ENCODE measurements at regions of chr4 and their contacts with region 1.

Region 1: GRCh38 chr4:99054428-99054994 is 34.1 kb downstream of the ADH5 start:
- DNase-seq: no peak
- H3K4me3 ChIP-seq: no peak overlapping the region
- H3K27ac ChIP-seq: no peak overlapping the region
- H3K4me1 ChIP-seq: peaks cover 6 to 12% (median 9%) of the 10 kb centered on the region in 4 donors
- H3K27me3 ChIP-seq: no peaks in the 10 kb centered on the region
- CTCF ChIP-seq: no peak
- EP300 ChIP-seq: no peak
- POLR2A ChIP-seq: no peak

Region 2: DNA sequence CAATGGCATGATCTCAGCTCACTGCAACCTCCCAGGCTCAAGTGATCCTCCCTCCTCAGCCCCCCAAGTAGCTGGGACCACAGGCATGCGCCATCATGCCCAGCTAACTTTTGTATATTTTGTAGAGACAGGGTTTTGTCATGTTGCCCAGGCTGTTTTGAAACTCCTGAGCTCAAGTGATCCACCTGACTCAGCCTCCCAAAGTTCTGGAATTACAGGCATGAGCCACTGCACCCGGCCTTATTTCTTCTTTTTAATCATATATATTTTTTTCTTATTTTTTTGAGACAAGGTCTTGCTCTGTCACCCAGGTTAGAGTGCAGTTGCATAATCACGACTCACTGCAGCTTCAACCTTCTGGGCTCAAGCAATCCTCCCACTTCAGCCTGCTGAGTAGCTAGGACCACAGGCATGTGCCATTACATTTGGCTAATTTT is 580.1 kb before region 1 on chr4:
- intact Hi-C with region 1: loop called (anchors 10 kb)
- DNase-seq: no peak
- H3K4me3 ChIP-seq: no peak overlapping the region
- H3K27ac ChIP-seq: no peak overlapping the region
- H3K4me1 ChIP-seq: no peaks in the 10 kb centered on the region
- H3K27me3 ChIP-seq: no peaks in the 10 kb centered on the region
- CTCF ChIP-seq: no peak
- EP300 ChIP-seq: no peak
- POLR2A ChIP-seq: no peak

Region 3: GRCh38 chr4:98939892-98940298 is 114.6 kb before region 1 on chr4:
- intact Hi-C with region 1: loop called (anchors 5 kb)
- DNase-seq: peak; percentile 66
- H3K4me3 ChIP-seq: no peak overlapping the region
- H3K27ac ChIP-seq: no peak overlapping the region
- H3K4me1 ChIP-seq: peaks cover 0 to 5% (median 0%) of the 10 kb centered on the region in 4 donors
- H3K27me3 ChIP-seq: no peaks in the 10 kb centered on the region
- CTCF ChIP-seq: peak; percentile 59 to 76 (median 60)
- EP300 ChIP-seq: no peak
- POLR2A ChIP-seq: no peak

Region 4: GRCh38 chr4:98995183-98996055 is 59.1 kb before region 1 on chr4 and contains the start of gene METAP1:
- intact Hi-C with region 1: loop called (anchors 5 kb)
- DNase-seq: peak; percentile 98
- H3K4me3 ChIP-seq: peak within 1 kb of the TSS; percentile 95 to 100 (median 98)
- H3K27ac ChIP-seq: peak within 1 kb of the TSS; percentile 84 to 94 (median 91)
- H3K4me1 ChIP-seq: peaks cover 7 to 30% (median 28%) of the 10 kb centered on the region in 4 donors
- H3K27me3 ChIP-seq: no peaks in the 10 kb centered on the region
- CTCF ChIP-seq: peak; percentile 55 to 76 (median 65)
- EP300 ChIP-seq: no peak
- POLR2A ChIP-seq: no peak
- total RNA-seq, gene METAP1: 38.4 to 58.1 (median 50.7) TPM